Transverse colon (tissue), 4 donors: ENCODE measurements at regions of chr21 and their contacts with region 1.

Region 1: GRCh38 chr21:36589355-36589971 is 109.5 kb upstream of the SIM2 start:
- DNase-seq: peak; percentile 32
- H3K4me3 ChIP-seq: no peak overlapping the region
- H3K27ac ChIP-seq: no peak overlapping the region
- H3K4me1 ChIP-seq: no peaks in the 10 kb centered on the region
- H3K27me3 ChIP-seq: peaks cover 12% of the 10 kb centered on the region
- CTCF ChIP-seq: peak; percentile 23 to 52 (median 43)
- EP300 ChIP-seq: no peak
- POLR2A ChIP-seq: no peak

Region 2: DNA sequence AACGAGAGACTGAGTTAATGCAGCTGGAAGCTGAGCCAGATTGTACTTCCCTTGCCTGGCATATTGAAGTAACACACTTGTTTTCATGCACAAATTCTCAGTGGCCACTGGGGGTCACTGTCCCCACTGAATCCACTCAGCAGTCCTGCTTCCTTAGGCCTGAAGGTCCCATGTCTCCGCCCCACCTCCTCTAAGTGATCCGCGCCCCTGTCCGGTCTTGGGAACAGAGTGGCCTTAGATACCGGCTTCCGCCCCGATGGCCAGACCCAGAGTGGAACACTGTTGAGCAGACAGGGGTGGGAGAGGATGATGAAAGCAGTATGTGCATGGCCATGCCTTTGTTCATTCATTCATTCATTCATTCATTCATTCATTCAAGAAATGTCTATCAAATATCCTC is 169.5 kb before region 1 on chr21:
- in situ Hi-C with region 1: loop called in 1 of 4 experiments (anchors 25 kb)
- intact Hi-C with region 1: no loop called
- DNase-seq: peak; percentile 78
- H3K4me3 ChIP-seq: no peak overlapping the region
- H3K27ac ChIP-seq: no peak overlapping the region
- H3K4me1 ChIP-seq: no peaks in the 10 kb centered on the region
- H3K27me3 ChIP-seq: no peaks in the 10 kb centered on the region
- CTCF ChIP-seq: peak; percentile 66 to 72 (median 70)
- EP300 ChIP-seq: no peak
- POLR2A ChIP-seq: no peak

Region 3: DNA sequence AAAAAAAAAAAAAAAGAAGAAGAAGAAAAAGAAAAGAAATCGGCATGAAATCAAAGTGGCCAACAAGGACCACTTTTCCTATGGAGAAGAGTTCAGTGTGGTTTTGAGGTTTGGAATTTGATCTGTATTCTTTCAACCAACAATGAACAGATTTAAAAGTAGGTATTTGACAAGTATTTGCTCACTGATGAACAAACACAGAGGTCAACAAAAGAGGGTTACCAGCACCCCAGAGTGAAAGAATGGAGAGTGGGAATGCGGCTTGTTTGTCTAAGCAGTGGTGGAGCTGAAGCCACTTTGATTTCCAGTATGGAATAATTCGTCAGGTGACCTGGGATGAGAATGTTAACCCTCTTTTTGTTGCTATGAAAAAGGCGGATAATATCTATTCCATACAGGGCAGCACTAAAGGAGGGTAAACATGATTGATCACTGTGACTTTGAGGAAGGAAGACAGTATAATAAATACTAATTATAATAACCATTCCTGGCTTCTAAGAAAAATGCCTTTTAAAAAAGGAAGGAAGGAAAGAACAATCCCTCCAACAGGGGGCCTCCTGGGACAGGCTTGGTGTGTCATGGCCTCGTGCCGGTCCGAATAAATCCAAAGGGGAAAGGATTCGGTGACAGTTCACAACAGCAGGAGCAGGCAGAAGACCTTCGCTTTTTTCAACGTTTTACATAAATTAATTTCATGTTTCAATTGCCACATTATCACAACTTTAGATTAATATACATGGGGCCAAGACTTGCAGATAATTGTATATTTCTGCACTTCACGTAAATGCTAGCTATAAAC is 72.2 kb after region 1 on chr21:
- in situ Hi-C with region 1: no loop called
- intact Hi-C with region 1: no loop called
- DNase-seq: peak; percentile 37
- H3K4me3 ChIP-seq: no peak overlapping the region
- H3K27ac ChIP-seq: no peak overlapping the region
- H3K4me1 ChIP-seq: no peaks in the 10 kb centered on the region
- H3K27me3 ChIP-seq: peaks cover 83% of the 10 kb centered on the region
- CTCF ChIP-seq: peak; percentile 18 to 46 (median 36)
- EP300 ChIP-seq: no peak
- POLR2A ChIP-seq: no peak

Region 4: DNA sequence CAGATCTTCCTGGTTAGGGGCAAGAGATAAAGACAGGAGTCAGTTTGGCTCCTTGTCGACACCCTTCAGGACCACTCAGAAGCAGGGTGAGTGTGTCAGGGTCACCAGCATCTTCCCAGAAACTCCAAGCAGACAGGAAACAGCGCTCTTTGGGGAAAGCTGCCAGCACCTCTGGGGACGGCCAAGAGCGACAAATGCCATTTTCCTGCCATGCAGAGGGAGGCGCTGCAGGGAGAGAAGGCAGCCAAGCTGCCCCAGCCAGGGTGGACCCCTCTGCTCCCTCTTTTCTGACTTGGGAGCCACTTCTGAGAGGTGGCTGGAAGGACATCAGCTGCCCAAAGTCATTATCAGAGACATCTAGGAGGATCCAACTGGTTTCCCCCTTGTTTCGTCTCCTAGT is 138.4 kb after region 1 on chr21:
- in situ Hi-C with region 1: no loop called
- intact Hi-C with region 1: no loop called
- DNase-seq: no peak
- H3K4me3 ChIP-seq: no peak overlapping the region
- H3K27ac ChIP-seq: no peak overlapping the region
- H3K4me1 ChIP-seq: no peaks in the 10 kb centered on the region
- H3K27me3 ChIP-seq: peaks cover 38% of the 10 kb centered on the region
- CTCF ChIP-seq: no peak
- EP300 ChIP-seq: no peak
- POLR2A ChIP-seq: no peak